Activated CD4-positive, alpha-beta memory T cell treated with anti-CD3 and anti-CD28 coated beads, Interleukin-2, amount 10 ng/mL, durations not matched to agents 7 days and 5 days (primary cell): ENCODE measurements at regions of chr12 and their contacts with region 1.

Region 1: GRCh38 chr12:3885277-3886094 is 12.3 kb upstream of the PARP11 start:
- DNase-seq: peak; percentile 45
- H3K4me3 Mint-ChIP-seq: no peak overlapping the region
- H3K27ac Mint-ChIP-seq: no peak overlapping the region
- H3K4me1 Mint-ChIP-seq: peaks cover 10% of the 10 kb centered on the region
- H3K27me3 Mint-ChIP-seq: peaks cover 9% of the 10 kb centered on the region

Region 2: DNA sequence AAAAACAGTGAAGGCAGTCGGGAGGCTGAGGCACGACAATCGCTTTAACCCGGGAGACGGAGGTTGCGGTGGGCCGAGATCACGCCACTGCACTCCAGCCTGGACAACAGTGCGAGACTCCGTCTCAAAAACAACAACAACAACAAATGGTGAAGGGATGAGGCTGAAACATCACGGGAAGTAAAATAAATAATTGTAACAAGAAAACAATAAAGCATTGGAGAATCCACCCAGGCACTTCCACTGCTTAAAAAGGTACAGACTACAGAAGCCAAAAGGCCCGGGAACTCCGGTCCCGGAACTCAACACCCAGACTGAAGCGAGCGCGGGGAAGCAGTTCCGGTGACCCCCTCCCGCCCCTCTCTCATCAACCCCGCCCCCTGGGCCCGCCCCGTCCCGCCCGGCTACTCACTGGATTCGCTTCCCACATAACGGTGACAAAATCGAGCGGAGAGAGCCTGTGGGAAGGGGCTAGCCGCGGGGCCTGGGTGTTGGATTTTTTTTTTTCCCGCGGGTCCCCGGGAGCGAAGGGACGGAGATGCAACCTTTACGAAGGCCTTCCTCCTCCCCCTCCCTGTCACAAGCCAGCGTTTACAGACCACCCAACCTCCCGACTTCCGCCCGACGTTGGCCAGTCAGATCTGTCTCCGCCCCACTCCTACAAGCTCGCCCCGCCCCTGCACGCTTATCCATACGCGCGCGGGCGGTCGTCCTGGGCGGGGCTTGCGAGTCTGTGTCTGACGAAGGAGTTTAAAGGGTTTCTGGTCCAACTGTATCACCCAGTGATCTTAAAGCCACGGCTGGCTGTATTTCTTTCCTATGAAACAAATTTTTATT is 12.5 kb before region 1 on chr12 and contains the start of gene PARP11:
- CTCF ChIA-PET with region 1: interaction called, 16 read pairs
- POLR2A ChIA-PET with region 1: interaction called, 9 read pairs
- DNase-seq: peak; percentile 97
- H3K4me3 Mint-ChIP-seq: peak within 1 kb of the TSS; percentile 90
- H3K27ac Mint-ChIP-seq: peak within 1 kb of the TSS; percentile 94
- H3K4me1 Mint-ChIP-seq: peaks cover 44% of the 10 kb centered on the region
- H3K27me3 Mint-ChIP-seq: peaks cover 4% of the 10 kb centered on the region
- total RNA-seq, gene PARP11: 26.8 to 28.6 TPM

Region 3: DNA sequence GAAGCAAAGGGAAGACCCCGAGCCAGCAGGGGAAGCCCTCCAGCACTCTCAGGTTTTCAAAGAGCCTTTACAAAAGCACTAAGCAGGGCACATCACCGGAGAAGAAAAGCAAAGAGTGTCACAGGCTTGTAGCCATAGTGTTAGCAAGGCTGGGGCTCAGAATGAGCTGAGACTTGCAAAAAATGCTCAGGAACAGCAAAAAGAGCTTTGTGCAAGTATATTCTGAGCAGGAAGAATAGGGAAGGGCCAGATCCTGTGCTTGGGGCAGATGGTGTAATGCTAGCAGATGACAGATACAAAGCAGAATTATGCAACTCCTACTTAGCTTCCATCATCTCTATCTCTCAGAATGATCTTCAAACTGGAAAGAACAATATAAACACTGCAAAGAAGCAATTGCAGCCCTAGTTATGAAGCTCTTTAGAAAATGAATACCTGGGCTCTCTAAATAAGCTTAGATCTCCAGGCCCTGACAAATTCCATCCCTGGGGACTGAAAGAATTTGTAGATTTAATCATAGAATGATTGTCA is 11.4 kb after region 1 on chr12:
- CTCF ChIA-PET with region 1: interaction called, 52 read pairs
- POLR2A ChIA-PET with region 1: interaction called, 9 read pairs
- DNase-seq: no peak
- H3K4me3 Mint-ChIP-seq: peak overlapping the region; percentile 51
- H3K27ac Mint-ChIP-seq: peak overlapping the region; percentile 97
- H3K4me1 Mint-ChIP-seq: peaks cover 37% of the 10 kb centered on the region
- H3K27me3 Mint-ChIP-seq: no peaks in the 10 kb centered on the region

Region 4: DNA sequence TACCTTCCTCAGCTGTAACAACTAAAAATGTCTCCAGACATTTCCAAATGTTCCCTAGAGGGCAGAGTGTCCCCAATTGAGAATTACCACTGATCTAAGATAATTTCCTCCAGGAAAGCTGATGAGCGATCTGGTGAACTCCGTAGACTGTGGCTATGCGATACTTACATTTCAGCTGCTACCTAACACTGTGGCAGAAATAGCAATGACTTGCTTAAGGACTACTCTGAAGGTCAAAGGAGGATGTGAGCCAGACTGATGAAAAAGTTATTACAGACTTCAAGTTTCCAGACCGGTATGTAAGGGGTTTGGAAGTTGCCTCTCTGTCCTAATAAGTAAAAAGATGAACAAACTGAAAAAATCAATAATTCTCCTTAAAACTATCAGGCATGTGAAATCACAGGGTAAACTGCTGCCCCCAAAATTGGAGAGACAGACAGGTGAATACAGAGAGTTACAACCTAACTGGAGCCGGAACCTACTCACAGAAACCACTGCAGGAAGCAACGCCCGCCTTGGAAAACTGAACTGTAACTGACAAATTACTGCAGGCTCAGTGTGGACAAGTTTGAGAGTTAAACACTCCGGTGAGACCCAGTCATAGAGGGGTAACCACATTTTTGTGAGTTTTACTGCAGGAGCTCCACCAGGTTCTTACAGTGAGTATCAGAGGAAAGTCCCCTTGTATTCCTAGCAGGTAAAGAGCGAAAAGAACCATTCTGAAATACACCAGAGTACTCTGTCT is 47.8 kb after region 1 on chr12:
- CTCF ChIA-PET with region 1: interaction called, 13 read pairs
- POLR2A ChIA-PET with region 1: interaction called, 6 read pairs
- DNase-seq: no peak
- H3K4me3 Mint-ChIP-seq: peak overlapping the region; percentile 56
- H3K27ac Mint-ChIP-seq: peak overlapping the region; percentile 63
- H3K4me1 Mint-ChIP-seq: peaks cover 47% of the 10 kb centered on the region
- H3K27me3 Mint-ChIP-seq: no peaks in the 10 kb centered on the region

Region 5: GRCh38 chr12:3964439-3964838 is 79.0 kb after region 1 on chr12:
- CTCF ChIA-PET with region 1: interaction called, 85 read pairs
- POLR2A ChIA-PET with region 1: interaction called, 6 read pairs
- DNase-seq: no peak
- H3K4me3 Mint-ChIP-seq: no peak overlapping the region
- H3K27ac Mint-ChIP-seq: no peak overlapping the region
- H3K4me1 Mint-ChIP-seq: peaks cover 19% of the 10 kb centered on the region
- H3K27me3 Mint-ChIP-seq: no peaks in the 10 kb centered on the region

Region 6: DNA sequence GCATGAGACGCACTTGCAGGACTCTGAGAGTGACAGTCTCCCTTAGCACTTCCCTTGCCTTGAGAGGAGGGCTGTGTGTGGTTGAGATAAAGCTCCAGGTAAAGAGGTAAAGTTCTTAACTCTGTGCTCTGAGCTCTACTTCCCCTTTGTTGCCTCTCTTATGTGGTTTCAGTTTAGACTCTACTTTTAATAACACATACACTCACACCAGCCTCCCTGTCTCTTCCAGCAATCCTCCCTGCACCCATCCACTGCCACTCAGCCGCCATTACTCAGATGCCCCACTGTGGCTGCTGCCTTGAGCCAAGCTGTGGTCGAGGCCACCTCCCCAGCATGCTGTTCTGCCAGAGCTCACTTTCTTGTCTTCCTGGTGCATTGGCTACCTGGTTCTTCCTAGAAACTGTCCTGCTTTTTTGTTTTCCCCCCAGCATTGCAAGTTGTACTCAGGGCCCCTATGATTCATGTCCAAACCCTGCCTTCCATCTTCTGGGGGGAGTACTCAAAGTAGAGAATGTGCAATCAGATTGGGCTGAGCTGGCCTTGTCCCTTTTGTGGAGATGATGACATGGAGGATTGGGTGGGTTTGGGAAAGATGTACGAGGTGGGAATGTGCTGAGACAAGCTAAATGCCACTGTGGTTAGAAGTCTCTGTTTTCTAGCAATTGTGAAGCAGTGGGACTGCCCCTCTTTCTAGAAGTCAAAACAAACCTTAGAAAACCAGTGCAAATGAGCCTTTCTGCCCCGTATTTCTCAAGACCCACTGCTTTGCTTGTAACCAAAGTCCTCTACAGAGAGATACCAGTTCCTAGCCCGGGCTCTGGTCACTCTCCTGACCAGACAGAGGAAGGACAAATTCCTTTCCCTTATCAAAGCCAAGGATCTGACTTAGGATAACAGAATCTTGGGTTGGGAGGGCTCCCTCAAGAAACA is 103.3 kb after region 1 on chr12:
- CTCF ChIA-PET with region 1: interaction called, 125 read pairs
- POLR2A ChIA-PET with region 1: interaction called, 3 read pairs
- DNase-seq: no peak
- H3K4me3 Mint-ChIP-seq: no peak overlapping the region
- H3K27ac Mint-ChIP-seq: peak overlapping the region; percentile 53
- H3K4me1 Mint-ChIP-seq: peaks cover 13% of the 10 kb centered on the region
- H3K27me3 Mint-ChIP-seq: peaks cover 10% of the 10 kb centered on the region

Region 7: GRCh38 chr12:4037747-4038312 is 152.3 kb after region 1 on chr12:
- CTCF ChIA-PET with region 1: interaction called, 22 read pairs
- POLR2A ChIA-PET with region 1: no interaction called
- DNase-seq: no peak
- H3K4me3 Mint-ChIP-seq: no peak overlapping the region
- H3K27ac Mint-ChIP-seq: no peak overlapping the region
- H3K4me1 Mint-ChIP-seq: peaks cover 3% of the 10 kb centered on the region
- H3K27me3 Mint-ChIP-seq: peaks cover 29% of the 10 kb centered on the region